Right cardiac atrium (tissue), 5 donors: ENCODE measurements at regions of chr4 and their contacts with region 1.

Region 1: DNA sequence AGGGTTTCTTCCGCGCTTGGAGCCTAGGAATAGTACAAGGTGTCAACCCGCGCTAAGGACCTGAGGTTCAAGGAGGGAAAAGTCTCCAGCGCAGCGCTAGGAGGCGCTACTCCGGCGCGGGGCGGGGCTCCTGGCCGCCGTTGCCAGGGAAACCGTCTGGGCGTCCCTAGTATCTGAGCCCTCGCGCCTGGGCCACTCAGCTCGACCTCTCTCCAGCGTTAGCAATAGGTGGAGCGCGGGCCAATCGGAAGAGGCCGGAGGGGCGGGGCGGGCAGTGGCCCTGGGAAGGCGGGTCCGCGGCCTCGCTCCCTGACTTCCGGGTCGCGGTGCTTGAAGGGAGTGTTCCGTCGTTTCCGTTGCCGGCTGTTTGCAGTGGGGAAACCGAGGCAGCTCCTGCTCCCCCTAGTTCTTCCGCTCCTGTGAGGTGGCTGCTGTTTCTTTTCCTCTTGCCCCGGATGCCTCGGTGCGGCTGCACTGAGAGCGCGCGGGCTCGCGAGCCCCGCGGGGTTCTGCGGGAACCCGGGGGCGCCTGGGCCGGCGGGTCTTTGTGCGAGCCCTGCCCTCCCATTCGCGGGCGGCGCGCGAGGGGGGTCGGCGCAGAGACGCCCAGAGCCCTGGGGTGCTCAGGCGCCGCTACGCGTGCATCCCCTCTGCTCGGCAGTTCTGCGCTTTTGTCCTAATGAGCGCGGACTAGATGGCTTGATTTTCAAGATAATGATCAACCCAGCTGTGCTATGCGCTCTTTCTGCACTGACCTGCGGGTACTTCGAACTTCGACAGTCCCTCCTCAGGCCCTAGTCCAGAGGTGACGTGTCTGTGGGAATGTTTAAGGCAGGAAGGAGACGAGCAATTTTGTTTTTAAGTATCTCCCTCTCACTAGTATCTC is at the start of gene ELMOD2:
- DNase-seq: peak; percentile 99 to 100 (median 100)
- ATAC-seq: peak; percentile 100
- H3K4me3 ChIP-seq: peak within 1 kb of the TSS; percentile 76
- H3K27ac ChIP-seq: peak within 1 kb of the TSS; percentile 64
- H3K4me1 ChIP-seq: no peaks in the 10 kb centered on the region
- H3K27me3 ChIP-seq: no peaks in the 10 kb centered on the region
- total RNA-seq, gene ELMOD2: 18.1 to 24.4 (median 22.3) TPM

Region 2: GRCh38 chr4:140579278-140579677 is 55.2 kb after region 1 on chr4:
- intact Hi-C with region 1: no loop called
- DNase-seq: peak in 1 of 3 donors; percentile 37
- ATAC-seq: peak in 1 of 2 donors; percentile 11
- H3K4me3 ChIP-seq: no peak overlapping the region
- H3K27ac ChIP-seq: no peak overlapping the region
- H3K4me1 ChIP-seq: no peaks in the 10 kb centered on the region
- H3K27me3 ChIP-seq: no peaks in the 10 kb centered on the region

Region 3: GRCh38 chr4:140851032-140851636 is 327.0 kb after region 1 on chr4:
- intact Hi-C with region 1: loop called in 1 of 4 experiments (anchors 10 kb)
- DNase-seq: no peak
- ATAC-seq: peak; percentile 60 to 68
- H3K4me3 ChIP-seq: no peak overlapping the region
- H3K27ac ChIP-seq: no peak overlapping the region
- H3K4me1 ChIP-seq: peaks cover 4% of the 10 kb centered on the region
- H3K27me3 ChIP-seq: no peaks in the 10 kb centered on the region